Dendritic cell treated with granulocyte-macrophage colony-stimulating factor and Interleukin-4, amounts not matched to agents 40 ng/mL and 50 ng/mL, for 4 days (primary cell): ENCODE measurements at regions of chr11 and their contacts with region 1.

Region 1: GRCh38 chr11:26134481-26135355 is 197.2 kb upstream of the ANO3 start:
- H3K4me3 Mint-ChIP-seq: no peak overlapping the region
- H3K27ac Mint-ChIP-seq: no peak overlapping the region
- H3K4me1 Mint-ChIP-seq: no peaks in the 10 kb centered on the region
- H3K27me3 Mint-ChIP-seq: no peaks in the 10 kb centered on the region

Region 2: GRCh38 chr11:26078217-26078821 is 56.4 kb before region 1 on chr11:
- intact Hi-C with region 1: loop called (anchors 10 kb)
- H3K4me3 Mint-ChIP-seq: no peak overlapping the region
- H3K27ac Mint-ChIP-seq: no peak overlapping the region
- H3K4me1 Mint-ChIP-seq: no peaks in the 10 kb centered on the region
- H3K27me3 Mint-ChIP-seq: no peaks in the 10 kb centered on the region

Region 3: GRCh38 chr11:26227296-26227695 is 92.6 kb after region 1 on chr11:
- intact Hi-C with region 1: no loop called
- H3K4me3 Mint-ChIP-seq: no peak overlapping the region
- H3K27ac Mint-ChIP-seq: no peak overlapping the region
- H3K4me1 Mint-ChIP-seq: no peaks in the 10 kb centered on the region
- H3K27me3 Mint-ChIP-seq: no peaks in the 10 kb centered on the region

Region 4: DNA sequence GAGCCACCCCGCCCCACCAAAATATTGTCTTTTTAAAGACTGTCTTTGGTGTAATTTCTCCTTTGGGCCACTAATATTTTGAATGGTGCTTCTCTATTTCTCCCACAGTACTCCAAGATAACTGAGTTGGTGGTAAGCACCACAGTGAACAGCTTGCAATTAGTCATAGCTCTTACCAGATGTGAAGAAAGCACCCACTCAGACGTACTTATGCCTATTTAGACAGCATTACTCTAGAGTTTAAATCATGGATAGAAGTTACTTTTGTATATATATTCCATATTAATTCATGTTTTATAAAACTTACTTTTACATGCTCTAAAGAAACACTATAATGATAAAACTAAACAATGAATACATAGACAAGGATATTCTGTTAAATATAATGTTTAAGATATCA is 209.9 kb after region 1 on chr11:
- intact Hi-C with region 1: no loop called
- H3K4me3 Mint-ChIP-seq: no peak overlapping the region
- H3K27ac Mint-ChIP-seq: no peak overlapping the region
- H3K4me1 Mint-ChIP-seq: no peaks in the 10 kb centered on the region
- H3K27me3 Mint-ChIP-seq: no peaks in the 10 kb centered on the region